HAP-1 (cell line): ENCODE measurements at regions of chr18 and their contacts with region 1.

Region 1: GRCh38 chr18:60554967-60555366 is 182.4 kb upstream of the MC4R start:
- DNase-seq: no peak
- H3K4me3 ChIP-seq: no peak overlapping the region
- H3K4me1 ChIP-seq: no peaks in the 10 kb centered on the region
- H3K27me3 ChIP-seq: no peaks in the 10 kb centered on the region

Region 2: DNA sequence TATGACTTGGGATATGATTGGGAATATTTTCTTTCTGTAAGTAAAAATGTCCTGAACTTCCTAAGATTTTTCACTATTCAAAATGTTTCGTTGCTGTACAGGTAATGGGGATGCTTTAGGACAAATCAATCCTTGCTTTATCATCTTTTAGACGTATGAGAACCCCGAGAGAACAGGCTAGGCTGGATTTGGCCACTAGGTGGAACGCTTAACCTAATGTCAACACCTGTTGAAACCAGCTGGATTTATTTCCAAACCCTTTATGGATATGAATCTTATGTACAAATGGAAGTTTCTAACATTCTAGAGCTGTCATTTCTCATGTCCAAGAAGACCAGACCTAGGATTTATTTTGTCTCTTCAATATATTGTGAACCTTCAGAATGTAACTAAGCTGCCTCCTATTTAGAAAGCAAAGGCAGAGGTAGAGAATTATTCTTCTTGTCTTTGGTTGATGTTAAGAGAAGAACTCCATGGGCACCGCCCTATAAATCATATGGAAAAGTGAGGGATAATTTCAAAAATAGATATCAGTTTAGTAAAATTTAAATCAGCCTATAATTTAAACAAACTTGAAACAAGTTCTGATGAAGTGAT is 558.5 kb before region 1 on chr18:
- in situ Hi-C with region 1: loop called (anchors 10 kb)
- DNase-seq: peak in 1 of 2 experiments; percentile 55
- H3K4me3 ChIP-seq: no peak overlapping the region
- H3K4me1 ChIP-seq: no peaks in the 10 kb centered on the region
- H3K27me3 ChIP-seq: no peaks in the 10 kb centered on the region